CD4-positive, alpha-beta T cell (primary cell): ENCODE measurements at regions of chr15 and their contacts with region 1.

Region 1: GRCh38 chr15:91400481-91400880 is 300.4 kb downstream of the SV2B start:
- DNase-seq: no peak
- ATAC-seq: no peak
- H3K4me3 ChIP-seq: no peak overlapping the region
- H3K4me3 Mint-ChIP-seq: no peak overlapping the region
- H3K27ac ChIP-seq: no peak overlapping the region
- H3K27ac Mint-ChIP-seq: no peak overlapping the region
- H3K4me1 ChIP-seq: no peaks in the 10 kb centered on the region
- H3K4me1 Mint-ChIP-seq: no peaks in the 10 kb centered on the region
- H3K27me3 ChIP-seq: no peaks in the 10 kb centered on the region
- H3K27me3 Mint-ChIP-seq: no peaks in the 10 kb centered on the region
- CTCF ChIP-seq: no peak

Region 2: GRCh38 chr15:89599021-89599420 is 1801.5 kb before region 1 on chr15:
- CTCF ChIA-PET with region 1: no interaction called
- POLR2A ChIA-PET with region 1: no interaction called
- intact Hi-C with region 1: no loop called
- DNase-seq: no peak
- ATAC-seq: no peak
- H3K4me3 ChIP-seq: no peak overlapping the region
- H3K4me3 Mint-ChIP-seq: no peak overlapping the region
- H3K27ac ChIP-seq: no peak overlapping the region
- H3K27ac Mint-ChIP-seq: no peak overlapping the region
- H3K4me1 ChIP-seq: no peaks in the 10 kb centered on the region
- H3K4me1 Mint-ChIP-seq: no peaks in the 10 kb centered on the region
- H3K27me3 ChIP-seq: no peaks in the 10 kb centered on the region
- H3K27me3 Mint-ChIP-seq: no peaks in the 10 kb centered on the region
- CTCF ChIP-seq: no peak

Region 3: GRCh38 chr15:91348752-91349500 is 51.6 kb before region 1 on chr15:
- CTCF ChIA-PET with region 1: no interaction called
- POLR2A ChIA-PET with region 1: no interaction called
- intact Hi-C with region 1: loop called in 1 of 2 experiments (anchors 5 kb)
- DNase-seq: peak in 3 of 14 experiments; percentile 14 to 83 (median 15)
- ATAC-seq: peak; percentile 11
- H3K4me3 ChIP-seq: no peak overlapping the region
- H3K4me3 Mint-ChIP-seq: no peak overlapping the region
- H3K27ac ChIP-seq: no peak overlapping the region
- H3K27ac Mint-ChIP-seq: no peak overlapping the region
- H3K4me1 ChIP-seq: peaks cover 10% of the 10 kb centered on the region
- H3K4me1 Mint-ChIP-seq: peaks cover 15% of the 10 kb centered on the region
- H3K27me3 ChIP-seq: no peaks in the 10 kb centered on the region
- H3K27me3 Mint-ChIP-seq: no peaks in the 10 kb centered on the region
- CTCF ChIP-seq: no peak